ENCODE measurements at regions of chr3 and their contacts with region 1.

Region 1: DNA sequence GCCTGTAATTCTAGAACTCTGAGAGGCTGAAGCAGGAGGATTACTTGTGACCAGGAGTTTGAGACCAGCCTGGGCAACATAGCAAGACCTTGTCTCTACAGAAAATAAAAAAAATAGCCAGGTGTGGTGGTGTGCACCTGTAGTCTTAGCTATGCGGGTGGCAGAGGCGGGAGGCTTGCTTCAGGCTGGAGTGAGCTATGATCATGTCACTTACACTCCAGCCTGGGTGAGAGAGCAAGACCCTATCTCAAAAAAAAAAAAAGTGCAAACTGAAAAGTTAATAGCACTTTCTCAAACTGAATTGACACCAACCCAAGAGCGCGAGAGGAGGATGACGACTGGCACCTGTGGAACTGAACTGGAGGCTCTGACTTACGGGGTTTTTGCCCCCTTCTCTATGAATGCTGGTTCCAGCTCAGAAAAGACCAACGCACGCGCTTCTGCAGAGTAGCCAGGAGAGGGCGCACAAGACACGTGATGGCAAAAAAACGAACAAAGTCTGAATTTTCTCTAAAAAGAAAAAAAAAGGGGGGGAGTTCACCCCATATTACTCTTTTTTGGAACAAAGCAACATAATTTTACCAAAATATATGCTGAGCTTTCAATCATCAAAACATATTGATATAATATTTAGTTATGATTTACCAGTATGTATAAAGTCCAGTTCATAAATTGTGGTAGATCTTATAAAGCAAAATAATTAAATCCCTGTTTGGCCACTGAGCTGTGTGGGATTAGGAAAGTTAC is 23.7 kb downstream of the CFAP92 start:
- DNase-seq: peak; percentile 38 to 70 (median 57)
- H3K4me3 ChIP-seq: no peak overlapping the region
- H3K4me3 Mint-ChIP-seq: no peak overlapping the region
- H3K27ac ChIP-seq: no peak overlapping the region
- H3K27ac Mint-ChIP-seq: no peak overlapping the region
- H3K4me1 ChIP-seq: no peaks in the 10 kb centered on the region
- H3K4me1 Mint-ChIP-seq: peaks cover 5 to 6% (median 6%) of the 10 kb centered on the region in 3 donors
- H3K27me3 ChIP-seq: no peaks in the 10 kb centered on the region
- H3K27me3 Mint-ChIP-seq: no peaks in the 10 kb centered on the region

Region 2: DNA sequence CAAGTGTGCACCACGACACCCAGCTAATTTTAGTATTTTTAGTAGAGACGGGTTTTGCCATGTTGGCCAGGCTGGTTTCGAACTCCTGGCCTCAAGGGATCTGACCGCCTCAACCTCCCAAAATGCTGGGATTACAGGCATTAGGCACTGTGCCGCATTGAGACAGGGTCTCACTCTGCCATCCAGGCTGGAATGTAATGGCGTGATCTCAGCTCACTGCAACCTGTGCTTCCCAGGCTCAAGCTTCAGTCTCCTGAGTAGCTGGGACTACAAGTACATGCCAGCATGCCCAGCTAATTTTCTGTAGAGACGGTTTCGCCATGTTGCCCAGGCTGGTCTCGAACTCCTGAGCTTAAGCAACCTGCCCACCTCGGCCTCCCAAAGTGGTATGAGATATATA is 39.1 kb before region 1 on chr3:
- CTCF ChIA-PET with region 1: no interaction called
- POLR2A ChIA-PET with region 1: no interaction called
- DNase-seq: no peak
- H3K4me3 ChIP-seq: no peak overlapping the region
- H3K4me3 Mint-ChIP-seq: no peak overlapping the region
- H3K27ac ChIP-seq: no peak overlapping the region
- H3K27ac Mint-ChIP-seq: no peak overlapping the region
- H3K4me1 ChIP-seq: no peaks in the 10 kb centered on the region
- H3K4me1 Mint-ChIP-seq: no peaks in the 10 kb centered on the region
- H3K27me3 ChIP-seq: no peaks in the 10 kb centered on the region
- H3K27me3 Mint-ChIP-seq: peaks cover 2 to 6% of the 10 kb centered on the region in 2 donors

Region 3: GRCh38 chr3:128984596-128984995 is 14.4 kb after region 1 on chr3:
- CTCF ChIA-PET with region 1: interaction called, 19 read pairs
- POLR2A ChIA-PET with region 1: no interaction called
- DNase-seq: no peak
- H3K4me3 ChIP-seq: no peak overlapping the region
- H3K4me3 Mint-ChIP-seq: no peak overlapping the region
- H3K27ac ChIP-seq: no peak overlapping the region
- H3K27ac Mint-ChIP-seq: no peak overlapping the region
- H3K4me1 ChIP-seq: no peaks in the 10 kb centered on the region
- H3K4me1 Mint-ChIP-seq: no peaks in the 10 kb centered on the region
- H3K27me3 ChIP-seq: no peaks in the 10 kb centered on the region
- H3K27me3 Mint-ChIP-seq: peaks cover 3 to 4% of the 10 kb centered on the region in 2 donors

Region 4: GRCh38 chr3:129003578-129004160 is 33.5 kb after region 1 on chr3:
- CTCF ChIA-PET with region 1: interaction called, 15 read pairs
- POLR2A ChIA-PET with region 1: no interaction called
- DNase-seq: peak; percentile 26 to 70 (median 55)
- H3K4me3 ChIP-seq: no peak overlapping the region
- H3K4me3 Mint-ChIP-seq: peak overlapping the region in 5 of 7 donors; percentile 29 to 63 (median 48)
- H3K27ac ChIP-seq: no peak overlapping the region
- H3K27ac Mint-ChIP-seq: peak overlapping the region in 1 of 8 donors; percentile 38
- H3K4me1 ChIP-seq: peaks cover 16% of the 10 kb centered on the region
- H3K4me1 Mint-ChIP-seq: peaks cover 23 to 43% (median 30%) of the 10 kb centered on the region in 3 donors
- H3K27me3 ChIP-seq: peaks cover 14% of the 10 kb centered on the region
- H3K27me3 Mint-ChIP-seq: peaks cover 32 to 33% of the 10 kb centered on the region in 2 donors

Region 5: DNA sequence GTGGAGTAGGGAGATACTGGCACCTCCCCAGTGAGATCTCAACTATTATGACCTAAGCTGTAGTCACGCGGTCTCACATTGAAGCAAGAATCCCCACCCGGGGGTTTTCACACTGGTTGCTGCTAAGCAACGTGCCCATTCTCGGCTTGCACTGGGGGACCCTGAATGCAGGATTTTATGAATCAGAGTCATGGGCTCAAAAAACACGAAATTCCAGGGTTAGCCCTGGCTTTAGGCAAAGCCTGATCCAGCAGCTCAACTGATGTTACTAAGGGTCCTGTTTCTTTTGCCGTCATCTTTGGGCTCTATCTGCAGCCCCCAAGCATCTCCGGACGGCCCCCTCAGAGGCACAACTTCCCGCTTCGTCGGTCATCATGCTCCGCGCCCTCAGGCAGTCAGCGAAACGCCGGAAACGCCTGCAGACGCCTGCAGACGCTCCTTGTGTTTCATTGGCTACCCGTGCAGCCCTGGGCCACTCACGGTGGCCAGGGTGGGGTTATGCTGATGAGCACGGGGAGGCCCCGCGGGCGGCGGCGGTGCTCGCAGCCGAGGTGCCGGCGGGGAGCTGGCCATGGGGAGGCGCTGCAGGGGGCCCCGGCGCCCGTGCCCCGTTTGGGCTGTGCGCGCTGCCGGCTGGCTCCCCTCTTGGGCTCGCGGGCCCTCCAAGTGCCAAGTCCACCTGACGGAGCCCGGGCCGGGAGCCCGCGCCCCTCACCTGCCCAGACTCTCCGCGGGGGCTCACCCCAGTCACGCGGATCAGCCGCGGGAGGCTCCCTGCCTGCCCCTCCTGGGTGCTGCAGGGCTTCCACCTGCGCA is 56.8 kb after region 1 on chr3:
- CTCF ChIA-PET with region 1: interaction called, 28 read pairs
- POLR2A ChIA-PET with region 1: no interaction called
- DNase-seq: peak; percentile 89 to 95 (median 93)
- H3K4me3 ChIP-seq: peak overlapping the region; percentile 66
- H3K4me3 Mint-ChIP-seq: peak overlapping the region; percentile 26 to 93 (median 85)
- H3K27ac ChIP-seq: peak overlapping the region; percentile 77
- H3K27ac Mint-ChIP-seq: peak overlapping the region; percentile 92 to 99 (median 98)
- H3K4me1 ChIP-seq: peaks cover 16% of the 10 kb centered on the region
- H3K4me1 Mint-ChIP-seq: peaks cover 24 to 34% (median 24%) of the 10 kb centered on the region in 3 donors
- H3K27me3 ChIP-seq: no peaks in the 10 kb centered on the region
- H3K27me3 Mint-ChIP-seq: no peaks in the 10 kb centered on the region

Region 6: GRCh38 chr3:129120254-129121004 is 150.3 kb after region 1 on chr3:
- CTCF ChIA-PET with region 1: interaction called, 23 read pairs
- POLR2A ChIA-PET with region 1: interaction called, 3 read pairs
- DNase-seq: peak; percentile 81 to 94 (median 93)
- H3K4me3 ChIP-seq: peak overlapping the region; percentile 93
- H3K4me3 Mint-ChIP-seq: peak overlapping the region; percentile 83 to 95 (median 90)
- H3K27ac ChIP-seq: peak overlapping the region; percentile 80
- H3K27ac Mint-ChIP-seq: peak overlapping the region; percentile 87 to 98 (median 96)
- H3K4me1 ChIP-seq: peaks cover 45% of the 10 kb centered on the region
- H3K4me1 Mint-ChIP-seq: peaks cover 60 to 65% (median 62%) of the 10 kb centered on the region in 3 donors
- H3K27me3 ChIP-seq: no peaks in the 10 kb centered on the region
- H3K27me3 Mint-ChIP-seq: no peaks in the 10 kb centered on the region

Region 7: GRCh38 chr3:129238945-129239706 is 269.0 kb after region 1 on chr3:
- CTCF ChIA-PET with region 1: interaction called, 143 read pairs
- POLR2A ChIA-PET with region 1: no interaction called
- DNase-seq: no peak
- H3K4me3 ChIP-seq: no peak overlapping the region
- H3K4me3 Mint-ChIP-seq: peak overlapping the region in 1 of 7 donors; percentile 47
- H3K27ac ChIP-seq: peak overlapping the region; percentile 33
- H3K27ac Mint-ChIP-seq: peak overlapping the region in 3 of 8 donors; percentile 43 to 57 (median 43)
- H3K4me1 ChIP-seq: peaks cover 16% of the 10 kb centered on the region
- H3K4me1 Mint-ChIP-seq: peaks cover 3 to 12% (median 6%) of the 10 kb centered on the region in 3 donors
- H3K27me3 ChIP-seq: no peaks in the 10 kb centered on the region
- H3K27me3 Mint-ChIP-seq: peaks cover 1 to 4% of the 10 kb centered on the region in 2 donors

Region 8: DNA sequence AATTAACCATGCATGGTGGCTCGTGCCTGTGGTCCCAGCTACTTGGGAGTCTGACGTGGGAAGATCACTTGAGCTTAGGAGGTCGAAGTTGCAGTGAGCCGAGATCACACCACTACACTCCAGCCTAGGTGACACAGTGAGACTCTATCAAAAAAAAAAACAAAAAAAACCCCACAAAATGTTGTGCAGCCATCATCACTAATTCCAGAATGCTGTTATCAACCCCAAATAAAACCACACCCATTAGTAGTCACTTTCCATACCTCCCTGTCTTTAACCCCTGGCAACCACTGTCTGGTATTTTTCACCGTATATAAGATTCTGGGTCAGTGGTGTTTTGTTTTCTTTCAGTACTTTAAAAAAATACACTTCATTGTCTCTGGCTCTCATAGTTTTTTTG is 325.1 kb after region 1 on chr3:
- CTCF ChIA-PET with region 1: no interaction called
- POLR2A ChIA-PET with region 1: no interaction called
- DNase-seq: no peak
- H3K4me3 ChIP-seq: no peak overlapping the region
- H3K4me3 Mint-ChIP-seq: no peak overlapping the region
- H3K27ac ChIP-seq: no peak overlapping the region
- H3K27ac Mint-ChIP-seq: peak overlapping the region in 4 of 8 donors; percentile 3 to 69 (median 29)
- H3K4me1 ChIP-seq: no peaks in the 10 kb centered on the region
- H3K4me1 Mint-ChIP-seq: peaks cover 8 to 19% (median 9%) of the 10 kb centered on the region in 3 donors
- H3K27me3 ChIP-seq: no peaks in the 10 kb centered on the region
- H3K27me3 Mint-ChIP-seq: no peaks in the 10 kb centered on the region

Region 9: DNA sequence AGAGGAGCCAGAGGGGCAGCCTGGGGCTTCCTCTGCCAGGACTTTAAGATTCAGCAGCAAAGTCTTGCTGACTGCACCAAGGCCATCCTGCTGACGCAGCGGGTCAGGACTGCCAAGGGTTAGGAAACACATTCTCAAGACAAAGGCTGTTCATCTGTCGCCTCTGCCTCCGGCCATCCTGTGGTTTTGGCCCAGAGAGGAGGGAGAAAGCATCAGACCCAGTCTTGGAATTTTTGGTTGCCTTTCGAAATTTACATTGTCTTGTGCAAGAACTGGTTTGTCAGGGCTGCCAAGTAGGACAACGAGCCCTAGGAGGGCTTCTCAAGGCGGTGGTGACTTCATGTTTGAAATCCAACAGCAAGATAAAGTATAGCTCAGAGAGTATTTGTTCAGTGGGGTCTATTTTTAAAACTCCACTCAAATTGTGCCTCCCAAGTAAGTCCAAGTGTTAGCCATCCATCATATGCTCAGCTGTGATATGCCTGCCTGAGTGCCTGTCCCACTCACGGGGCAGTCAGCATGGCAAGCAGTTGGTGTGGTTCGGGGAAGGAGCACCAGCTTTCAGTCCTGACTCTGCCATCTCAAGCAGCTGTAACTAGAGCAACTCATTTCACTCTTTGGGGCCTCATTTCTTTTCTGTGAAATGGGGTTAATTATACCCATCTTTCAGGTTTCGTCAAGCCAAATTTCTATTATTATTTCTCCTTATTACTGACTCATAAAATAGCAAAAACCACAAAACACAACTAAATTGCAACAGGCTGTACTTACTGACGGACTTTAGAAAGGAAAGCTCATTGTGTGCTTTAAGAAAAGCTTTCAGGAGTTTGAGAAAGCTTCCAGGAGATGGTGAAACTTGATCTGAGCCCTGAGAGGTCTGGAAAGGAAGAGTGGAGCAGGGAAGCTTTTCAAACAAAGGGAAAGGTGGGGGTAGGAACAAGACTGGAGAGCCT is 515.8 kb after region 1 on chr3:
- CTCF ChIA-PET with region 1: no interaction called
- POLR2A ChIA-PET with region 1: no interaction called
- DNase-seq: no peak
- H3K4me3 ChIP-seq: no peak overlapping the region
- H3K4me3 Mint-ChIP-seq: no peak overlapping the region
- H3K27ac ChIP-seq: no peak overlapping the region
- H3K27ac Mint-ChIP-seq: peak overlapping the region in 3 of 8 donors; percentile 23 to 71 (median 57)
- H3K4me1 ChIP-seq: peaks cover 12% of the 10 kb centered on the region
- H3K4me1 Mint-ChIP-seq: peaks cover 7 to 11% (median 9%) of the 10 kb centered on the region in 3 donors
- H3K27me3 ChIP-seq: no peaks in the 10 kb centered on the region
- H3K27me3 Mint-ChIP-seq: no peaks in the 10 kb centered on the region